WTC11 (cell line): ENCODE measurements at regions of chr19 and their contacts with region 1.

Region 1: GRCh38 chr19:21767065-21767800 is at the start of gene ZNF100:
- DNase-seq: peak; percentile 89
- ATAC-seq: peak; percentile 99
- H3K4me3 Mint-ChIP-seq: peak within 1 kb of the TSS; percentile 98
- H3K27ac Mint-ChIP-seq: peak within 1 kb of the TSS; percentile 97
- H3K4me1 Mint-ChIP-seq: peaks cover 10% of the 10 kb centered on the region
- H3K27me3 Mint-ChIP-seq: no peaks in the 10 kb centered on the region
- CTCF ChIP-seq: no peak
- total RNA-seq, gene ZNF100: 21.9 to 24.3 TPM (median 23.6 TPM) in 3 replicates

Region 2: GRCh38 chr19:21851596-21852345 is 84.5 kb after region 1 on chr19:
- CTCF ChIA-PET with region 1: interaction called, 4 read pairs
- POLR2A ChIA-PET with region 1: interaction called, 29 read pairs
- DNase-seq: peak; percentile 95
- ATAC-seq: peak; percentile 98
- H3K4me3 Mint-ChIP-seq: peak overlapping the region; percentile 89
- H3K27ac Mint-ChIP-seq: peak overlapping the region; percentile 93; the same call in 1 of the 2 replicates
- H3K4me1 Mint-ChIP-seq: peaks cover 23% of the 10 kb centered on the region
- H3K27me3 Mint-ChIP-seq: peaks cover 21% of the 10 kb centered on the region
- CTCF ChIP-seq: no peak

Region 3: DNA sequence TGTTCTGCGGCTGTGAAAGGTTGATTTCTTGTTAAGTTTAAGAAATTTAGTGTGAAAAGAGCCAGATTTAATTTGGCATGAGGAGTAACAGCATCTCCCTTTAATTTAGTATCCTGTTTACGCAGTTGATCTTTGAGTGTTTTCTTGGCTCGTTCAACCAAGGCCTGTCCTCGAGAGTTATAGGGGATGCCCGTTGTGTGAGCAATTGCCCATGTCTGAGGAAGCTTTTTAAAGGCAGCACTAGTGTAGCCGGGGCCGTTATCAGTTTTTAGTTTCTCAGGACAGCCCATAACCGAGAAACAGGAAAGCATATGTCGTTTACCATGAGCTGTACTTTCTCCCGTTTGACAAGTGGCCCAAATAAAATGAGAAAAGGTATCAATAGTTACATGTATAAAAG is 116.3 kb after region 1 on chr19:
- CTCF ChIA-PET with region 1: no interaction called
- POLR2A ChIA-PET with region 1: no interaction called
- DNase-seq: no peak
- ATAC-seq: no peak
- H3K4me3 Mint-ChIP-seq: no peak overlapping the region
- H3K27ac Mint-ChIP-seq: no peak overlapping the region
- H3K4me1 Mint-ChIP-seq: no peaks in the 10 kb centered on the region
- H3K27me3 Mint-ChIP-seq: peaks cover 19% of the 10 kb centered on the region
- CTCF ChIP-seq: no peak